ENCODE measurements at regions of chr2 and their contacts with region 1.

Region 1: GRCh38 chr2:85538486-85539360 is at the start of gene MAT2A:
- DNase-seq: peak; percentile 91
- ATAC-seq: peak; percentile 83
- H3K4me3 ChIP-seq: peak within 1 kb of the TSS; percentile 81 to 96 (median 95)
- H3K27ac ChIP-seq: peak within 1 kb of the TSS; percentile 99
- H3K4me1 ChIP-seq: peaks cover 44% of the 10 kb centered on the region
- H3K27me3 ChIP-seq: no peaks in the 10 kb centered on the region; a peak in 1 of 5 replicates
- CTCF ChIP-seq: peak; percentile 97
- EP300 ChIP-seq: peak; percentile 3 to 58; a peak in 1 of 4 replicates
- POLR2A ChIP-seq: peak; percentile 99 to 100
- RAD21 ChIP-seq: peak; percentile 86
- total RNA-seq, gene MAT2A: 55.8 and 155 TPM in 2 replicates

Region 2: GRCh38 chr2:85327822-85328617 is 210.7 kb before region 1 on chr2 and contains the start of gene TGOLN2:
- CTCF ChIA-PET with region 1: no interaction called
- POLR2A ChIA-PET with region 1: interaction called, 18 read pairs
- in situ Hi-C with region 1: no loop called
- intact Hi-C with region 1: no loop called
- DNase-seq: peak; percentile 89
- ATAC-seq: peak; percentile 84
- H3K4me3 ChIP-seq: peak within 1 kb of the TSS; percentile 80 to 90 (median 89)
- H3K27ac ChIP-seq: peak within 1 kb of the TSS; percentile 95
- H3K4me1 ChIP-seq: peaks cover 42% of the 10 kb centered on the region
- H3K27me3 ChIP-seq: no peaks in the 10 kb centered on the region; a peak in 1 of 5 replicates
- CTCF ChIP-seq: peak; percentile 47
- EP300 ChIP-seq: peak; percentile 35 to 43; a peak in 3 of 4 replicates
- POLR2A ChIP-seq: peak; percentile 99
- RAD21 ChIP-seq: peak; percentile 72
- total RNA-seq, gene TGOLN2: 62.5 and 99.6 TPM in 2 replicates

Region 3: GRCh38 chr2:85401850-85402243 is 136.9 kb before region 1 on chr2:
- CTCF ChIA-PET with region 1: no interaction called
- POLR2A ChIA-PET with region 1: interaction called, 13 read pairs
- in situ Hi-C with region 1: no loop called
- intact Hi-C with region 1: no loop called
- DNase-seq: no peak
- ATAC-seq: peak; percentile 50
- H3K4me3 ChIP-seq: no peak overlapping the region
- H3K27ac ChIP-seq: no peak overlapping the region
- H3K4me1 ChIP-seq: peaks cover 56% of the 10 kb centered on the region
- H3K27me3 ChIP-seq: no peaks in the 10 kb centered on the region
- CTCF ChIP-seq: no peak
- EP300 ChIP-seq: no peak
- POLR2A ChIP-seq: no peak
- RAD21 ChIP-seq: no peak

Region 4: DNA sequence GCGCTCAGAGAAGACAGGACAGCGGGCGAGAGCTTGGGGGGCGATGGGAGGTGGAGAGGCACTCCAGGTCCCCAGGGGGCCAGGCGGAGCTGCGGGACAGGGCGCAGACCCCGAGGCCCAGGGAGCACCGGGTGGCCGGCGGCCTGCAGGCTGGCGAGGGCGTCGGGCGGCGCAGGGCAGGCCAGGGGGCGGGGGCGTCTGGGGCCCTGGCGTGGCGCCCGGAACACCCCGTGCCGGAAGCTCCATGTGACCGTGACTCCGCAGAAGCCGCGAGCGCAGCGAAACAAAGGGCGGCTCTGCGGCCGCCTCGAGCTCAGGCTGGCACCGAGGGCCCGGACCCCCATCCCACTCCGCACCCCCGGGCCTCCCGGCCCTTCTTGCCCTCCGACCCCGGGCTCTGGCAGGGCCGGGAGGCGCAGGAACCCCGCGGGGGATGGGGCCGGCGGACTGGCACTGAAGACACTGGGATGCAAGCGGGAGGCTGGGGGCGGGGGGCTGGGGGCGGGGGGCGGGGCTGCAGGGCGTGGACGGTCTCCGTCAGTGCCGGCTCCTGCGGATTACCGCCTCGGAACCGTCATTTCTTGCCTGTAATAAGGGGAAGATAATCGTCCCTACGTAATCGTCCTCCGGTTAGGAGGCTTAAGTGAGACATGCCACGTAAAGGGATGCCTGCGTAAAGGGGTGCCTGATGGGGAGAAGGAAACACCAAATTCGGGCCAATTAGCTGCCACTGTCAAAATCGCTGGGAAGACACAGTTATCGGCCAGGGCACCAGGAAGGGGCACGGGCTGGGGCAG is 101.0 kb before region 1 on chr2:
- CTCF ChIA-PET with region 1: no interaction called
- POLR2A ChIA-PET with region 1: interaction called, 26 read pairs
- in situ Hi-C with region 1: no loop called
- intact Hi-C with region 1: no loop called
- DNase-seq: no peak
- ATAC-seq: no peak
- H3K4me3 ChIP-seq: no peak overlapping the region
- H3K27ac ChIP-seq: no peak overlapping the region
- H3K4me1 ChIP-seq: peaks cover 28% of the 10 kb centered on the region
- H3K27me3 ChIP-seq: peaks cover 9 to 67% of the 10 kb centered on the region in 2 experiments
- CTCF ChIP-seq: no peak
- EP300 ChIP-seq: no peak
- POLR2A ChIP-seq: no peak
- RAD21 ChIP-seq: no peak

Region 5: DNA sequence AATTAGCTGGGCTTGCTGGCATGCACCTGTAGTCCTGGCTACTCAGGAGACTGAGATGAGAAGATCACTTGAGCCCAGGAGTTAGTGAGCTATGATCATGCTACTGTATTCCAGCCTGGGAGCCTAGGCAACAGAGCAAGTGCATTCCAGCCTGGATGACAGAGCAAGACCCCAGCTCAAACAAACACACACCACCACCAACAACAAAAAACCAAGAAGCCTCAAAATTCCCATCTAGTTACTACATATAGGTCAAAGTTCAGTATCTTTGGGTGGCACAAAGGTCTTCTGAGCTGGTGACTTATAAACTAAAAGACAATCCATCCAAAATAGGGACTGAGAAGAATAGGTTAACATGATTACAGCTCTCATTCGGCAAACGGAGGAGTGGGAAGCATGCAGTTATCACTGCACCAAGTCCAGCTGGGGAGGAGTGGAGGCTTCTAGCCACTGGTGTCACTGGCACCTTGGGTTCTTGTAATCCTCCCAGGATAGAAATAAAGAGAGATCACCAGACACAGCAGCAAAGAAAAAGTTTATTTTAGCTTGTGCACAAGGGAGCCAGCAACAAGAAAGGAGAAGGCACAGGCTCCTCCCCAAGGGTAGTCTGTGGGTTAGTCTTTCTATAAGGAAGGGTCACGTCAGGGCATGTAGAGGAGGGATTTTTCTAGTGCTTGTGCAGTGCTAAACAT is 62.8 kb before region 1 on chr2:
- CTCF ChIA-PET with region 1: no interaction called
- POLR2A ChIA-PET with region 1: interaction called, 109 read pairs
- in situ Hi-C with region 1: no loop called
- intact Hi-C with region 1: loop called (anchors 1 kb)
- DNase-seq: peak; percentile 74
- ATAC-seq: peak; percentile 73
- H3K4me3 ChIP-seq: no peak overlapping the region; a peak in 1 of 6 replicates
- H3K27ac ChIP-seq: peak overlapping the region; percentile 30
- H3K4me1 ChIP-seq: peaks cover 52% of the 10 kb centered on the region
- H3K27me3 ChIP-seq: no peaks in the 10 kb centered on the region
- CTCF ChIP-seq: no peak
- EP300 ChIP-seq: peak in 1 of 2 experiments; percentile 47; a peak in 1 of 4 replicates
- POLR2A ChIP-seq: no peak
- RAD21 ChIP-seq: no peak

Region 6: GRCh38 chr2:85561317-85561979 is 22.7 kb after region 1 on chr2 and contains the start of gene GGCX:
- CTCF ChIA-PET with region 1: no interaction called
- POLR2A ChIA-PET with region 1: interaction called, 445 read pairs
- in situ Hi-C with region 1: no loop called
- intact Hi-C with region 1: no loop called
- DNase-seq: peak; percentile 95
- ATAC-seq: peak; percentile 89
- H3K4me3 ChIP-seq: peak within 1 kb of the TSS; percentile 84 to 98 (median 91)
- H3K27ac ChIP-seq: peak within 1 kb of the TSS; percentile 91
- H3K4me1 ChIP-seq: peaks cover 59% of the 10 kb centered on the region
- H3K27me3 ChIP-seq: peaks cover 0 to 4% of the 10 kb centered on the region in 2 experiments; a peak in 1 of 5 replicates
- CTCF ChIP-seq: peak; percentile 48
- EP300 ChIP-seq: peak; percentile 35 to 56; a peak in 3 of 4 replicates
- POLR2A ChIP-seq: peak; percentile 98
- RAD21 ChIP-seq: peak; percentile 70
- total RNA-seq, gene GGCX: 51.3 and 103 TPM in 2 replicates

Region 7: DNA sequence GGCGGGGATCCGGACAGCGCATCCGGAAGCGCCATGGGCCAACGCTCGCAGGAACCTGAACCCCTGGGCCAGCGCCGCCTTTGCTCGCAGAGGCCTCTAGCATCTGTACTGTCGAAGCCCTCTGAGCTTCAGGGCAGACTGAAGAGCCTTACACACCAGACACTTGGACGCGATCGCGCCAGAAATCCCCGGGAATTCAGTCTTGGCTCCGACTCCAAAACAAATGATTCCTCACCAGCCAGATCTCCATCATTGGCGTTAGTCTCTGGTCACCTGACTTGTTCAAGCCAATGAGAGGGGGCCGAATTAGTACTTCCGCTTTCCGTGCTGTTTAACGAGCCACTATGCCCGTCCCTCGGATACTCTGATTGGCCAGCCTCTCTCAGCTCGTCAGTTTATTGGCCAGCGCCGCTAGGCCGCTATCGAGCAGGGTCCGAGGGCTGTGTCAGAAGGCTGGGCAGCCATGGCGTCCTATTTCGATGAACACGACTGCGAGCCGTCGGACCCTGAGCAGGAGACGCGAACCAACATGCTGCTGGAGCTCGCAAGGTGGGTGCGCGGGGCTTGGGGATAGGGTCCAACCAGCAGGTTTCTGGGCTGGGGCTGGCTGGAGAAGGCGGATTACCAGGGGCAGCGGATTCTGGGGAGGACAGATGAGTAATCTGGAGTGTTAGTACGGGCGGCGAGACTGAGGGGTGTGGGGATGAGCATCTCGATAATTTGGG is 56.7 kb after region 1 on chr2 and contains the start of gene RNF181:
- CTCF ChIA-PET with region 1: no interaction called
- POLR2A ChIA-PET with region 1: interaction called, 41 read pairs
- in situ Hi-C with region 1: no loop called
- intact Hi-C with region 1: no loop called
- DNase-seq: peak; percentile 99
- ATAC-seq: peak; percentile 92
- H3K4me3 ChIP-seq: peak within 1 kb of the TSS; percentile 88 to 97 (median 90)
- H3K27ac ChIP-seq: peak within 1 kb of the TSS; percentile 80
- H3K4me1 ChIP-seq: peaks cover 86% of the 10 kb centered on the region
- H3K27me3 ChIP-seq: no peaks in the 10 kb centered on the region; a peak in 1 of 5 replicates
- CTCF ChIP-seq: no peak
- EP300 ChIP-seq: no peak
- POLR2A ChIP-seq: peak in 1 of 2 experiments; percentile 77; a peak in 1 of 4 replicates
- RAD21 ChIP-seq: no peak; the same call in 1 of the 2 replicates
- total RNA-seq, gene RNF181: 224 and 234 TPM in 2 replicates

Region 8: GRCh38 chr2:85681354-85681728 is 142.6 kb after region 1 on chr2:
- CTCF ChIA-PET with region 1: no interaction called
- POLR2A ChIA-PET with region 1: no interaction called
- in situ Hi-C with region 1: no loop called
- intact Hi-C with region 1: no loop called
- DNase-seq: no peak
- ATAC-seq: no peak
- H3K4me3 ChIP-seq: no peak overlapping the region
- H3K27ac ChIP-seq: no peak overlapping the region
- H3K4me1 ChIP-seq: peaks cover 8% of the 10 kb centered on the region; the same call in 1 of the 2 replicates
- H3K27me3 ChIP-seq: peaks cover 1 to 21% of the 10 kb centered on the region in 2 experiments; a peak in 3 of 5 replicates
- CTCF ChIP-seq: no peak
- EP300 ChIP-seq: no peak
- POLR2A ChIP-seq: no peak
- RAD21 ChIP-seq: no peak